BJ (cell line): ENCODE measurements at regions of chr2 and their contacts with region 1.

Region 1: GRCh38 chr2:191051825-191052778 is 38.1 kb upstream of the STAT1 start:
- DNase-seq: peak; percentile 26
- H3K4me3 ChIP-seq: no peak overlapping the region
- H3K27me3 ChIP-seq: no peaks in the 10 kb centered on the region
- CTCF ChIP-seq: peak; percentile 55

Region 2: DNA sequence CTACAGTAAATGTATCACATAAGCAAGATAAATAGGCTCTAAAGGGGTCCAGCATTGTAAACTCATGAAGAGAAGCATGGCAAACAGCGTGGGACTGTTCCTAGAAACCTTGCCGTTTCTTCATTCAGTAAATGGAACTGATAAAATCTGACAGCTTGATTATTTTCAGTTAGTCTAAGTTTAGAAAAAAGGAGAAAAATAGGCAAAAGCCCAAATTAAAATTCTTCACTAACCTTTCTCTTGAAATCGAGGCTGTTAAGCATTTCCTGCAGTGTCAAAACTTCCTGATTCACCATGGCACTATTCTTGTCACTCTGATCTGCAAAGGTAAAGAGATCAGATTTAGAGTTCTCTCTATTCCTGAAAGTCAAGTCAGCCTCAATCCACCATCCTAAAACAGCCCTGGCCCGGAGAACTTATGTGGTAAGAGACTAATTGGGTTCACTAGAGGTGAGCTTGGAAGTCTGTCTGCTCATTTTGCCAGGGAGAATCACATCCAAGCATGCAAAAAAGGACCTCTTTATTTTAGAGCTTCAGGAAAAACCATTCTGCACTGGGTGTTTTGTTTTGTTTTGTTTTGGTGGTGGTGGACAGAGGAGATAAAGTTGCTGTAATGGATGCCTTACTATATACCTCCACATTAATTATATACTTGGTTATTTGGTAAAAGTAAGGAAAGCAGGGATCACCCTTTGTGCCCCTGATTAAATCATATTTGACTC is 14.3 kb after region 1 on chr2:
- CTCF ChIA-PET with region 1: interaction called, 11 read pairs
- POLR2A ChIA-PET with region 1: interaction called, 5 read pairs
- DNase-seq: no peak
- H3K4me3 ChIP-seq: no peak overlapping the region
- H3K27me3 ChIP-seq: no peaks in the 10 kb centered on the region
- CTCF ChIP-seq: no peak

Region 3: GRCh38 chr2:191150600-191151330 is 98.7 kb after region 1 on chr2 and contains the start of gene STAT4:
- CTCF ChIA-PET with region 1: interaction called, 160 read pairs
- POLR2A ChIA-PET with region 1: interaction called, 5 read pairs
- DNase-seq: no peak
- H3K4me3 ChIP-seq: peak within 1 kb of the TSS; percentile 31
- H3K27me3 ChIP-seq: no peaks in the 10 kb centered on the region
- CTCF ChIP-seq: no peak
- polyA plus RNA-seq, gene STAT4: 1.3 and 1.5 TPM in 2 replicates

Region 4: GRCh38 chr2:191158193-191158592 is 106.1 kb after region 1 on chr2:
- CTCF ChIA-PET with region 1: interaction called, 160 read pairs
- POLR2A ChIA-PET with region 1: interaction called, 5 read pairs
- DNase-seq: no peak
- H3K4me3 ChIP-seq: no peak overlapping the region
- H3K27me3 ChIP-seq: no peaks in the 10 kb centered on the region
- CTCF ChIP-seq: no peak

Region 5: GRCh38 chr2:191521608-191522208 is 469.6 kb after region 1 on chr2:
- CTCF ChIA-PET with region 1: interaction called, 16 read pairs
- POLR2A ChIA-PET with region 1: no interaction called
- DNase-seq: peak; percentile 16
- H3K4me3 ChIP-seq: no peak overlapping the region
- H3K27me3 ChIP-seq: no peaks in the 10 kb centered on the region
- CTCF ChIP-seq: peak; percentile 72